ENCODE measurements at regions of chr4 and their contacts with region 1.

Region 1: DNA sequence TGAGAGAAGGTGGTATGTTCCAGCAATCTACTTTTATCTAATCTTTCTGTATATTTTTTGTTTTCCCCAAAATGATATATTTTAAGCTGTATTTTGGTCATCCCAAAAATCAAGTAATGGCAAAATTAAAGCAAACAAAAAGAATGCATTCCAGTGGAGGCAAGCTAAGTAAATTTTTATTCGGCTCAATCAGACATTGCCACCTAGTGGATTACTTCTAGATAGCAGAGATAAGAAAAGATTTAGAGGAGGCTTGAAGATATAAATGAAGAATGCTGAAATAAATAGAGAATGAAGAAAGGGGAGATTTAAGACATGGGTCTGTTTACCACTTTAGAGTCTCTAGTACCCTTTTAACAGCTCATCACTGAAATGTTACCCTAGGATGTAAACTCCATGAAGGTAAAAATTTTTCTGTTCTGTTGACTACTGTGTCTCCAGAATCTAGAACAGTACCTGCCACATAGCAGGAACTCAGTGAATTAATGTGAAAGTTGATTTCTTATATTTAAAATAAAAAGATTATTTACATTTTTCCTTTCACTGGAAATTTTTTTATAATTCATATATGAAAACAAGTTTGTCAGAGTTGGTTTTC is 110.9 kb upstream of the ANK2 start:
- DNase-seq: peak; percentile 15
- ATAC-seq: no peak
- H3K4me3 ChIP-seq: no peak overlapping the region
- H3K27ac ChIP-seq: no peak overlapping the region
- H3K4me1 ChIP-seq: no peaks in the 10 kb centered on the region
- H3K27me3 ChIP-seq: no peaks in the 10 kb centered on the region
- CTCF ChIP-seq: peak; percentile 70; the same call in 1 of the 2 replicates

Region 2: DNA sequence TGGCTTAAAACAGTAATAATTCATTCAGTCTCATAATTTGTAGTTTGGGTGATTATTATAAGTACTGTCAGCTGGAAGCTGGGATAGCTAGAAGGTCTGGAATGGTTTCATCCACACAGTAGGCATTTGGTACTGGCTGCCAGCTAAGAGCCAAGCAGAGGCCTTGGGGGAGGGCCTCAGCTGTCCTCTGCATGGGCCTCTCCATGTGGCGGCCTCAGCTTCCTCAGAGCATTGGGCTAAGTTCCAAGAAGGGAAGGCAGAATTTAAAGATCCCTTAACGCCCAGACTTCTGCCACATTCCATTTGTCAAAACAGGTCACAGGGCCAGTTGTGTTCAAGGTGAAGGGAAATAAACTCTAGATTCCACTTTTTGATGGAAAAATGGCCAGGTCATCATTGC is 515.9 kb before region 1 on chr4:
- CTCF ChIA-PET with region 1: no interaction called
- POLR2A ChIA-PET with region 1: no interaction called
- in situ Hi-C with region 1: no loop called
- intact Hi-C with region 1: no loop called
- DNase-seq: no peak
- ATAC-seq: no peak
- H3K4me3 ChIP-seq: no peak overlapping the region
- H3K27ac ChIP-seq: no peak overlapping the region
- H3K4me1 ChIP-seq: no peaks in the 10 kb centered on the region
- H3K27me3 ChIP-seq: no peaks in the 10 kb centered on the region
- CTCF ChIP-seq: no peak

Region 3: GRCh38 chr4:112636688-112637551 is 301.6 kb before region 1 on chr4 and contains the starts of genes LARP7 and ZGRF1:
- CTCF ChIA-PET with region 1: no interaction called
- POLR2A ChIA-PET with region 1: no interaction called
- in situ Hi-C with region 1: no loop called
- intact Hi-C with region 1: loop called (anchors 5 kb)
- DNase-seq: peak; percentile 92
- ATAC-seq: peak; percentile 98
- H3K4me3 ChIP-seq: peak within 1 kb of the TSS; percentile 92 to 98
- H3K27ac ChIP-seq: peak within 1 kb of the TSS; percentile 96
- H3K4me1 ChIP-seq: peaks cover 3% of the 10 kb centered on the region; the same call in 1 of the 2 replicates
- H3K27me3 ChIP-seq: no peaks in the 10 kb centered on the region
- CTCF ChIP-seq: peak; percentile 73
- total RNA-seq, gene LARP7: 21.7 TPM
- total RNA-seq, gene ZGRF1: 7.4 TPM

Region 4: GRCh38 chr4:112765317-112765975 is 173.1 kb before region 1 on chr4:
- CTCF ChIA-PET with region 1: no interaction called
- POLR2A ChIA-PET with region 1: no interaction called
- in situ Hi-C with region 1: no loop called
- intact Hi-C with region 1: loop called (anchors 5 kb)
- DNase-seq: no peak
- ATAC-seq: peak; percentile 66; the same call in 1 of the 2 replicates
- H3K4me3 ChIP-seq: no peak overlapping the region
- H3K27ac ChIP-seq: no peak overlapping the region
- H3K4me1 ChIP-seq: no peaks in the 10 kb centered on the region
- H3K27me3 ChIP-seq: no peaks in the 10 kb centered on the region
- CTCF ChIP-seq: peak; percentile 56

Region 5: GRCh38 chr4:112853662-112854256 is 84.8 kb before region 1 on chr4:
- CTCF ChIA-PET with region 1: no interaction called
- POLR2A ChIA-PET with region 1: no interaction called
- in situ Hi-C with region 1: no loop called
- intact Hi-C with region 1: loop called (anchors 5 kb)
- DNase-seq: no peak
- ATAC-seq: no peak
- H3K4me3 ChIP-seq: no peak overlapping the region
- H3K27ac ChIP-seq: no peak overlapping the region
- H3K4me1 ChIP-seq: no peaks in the 10 kb centered on the region
- H3K27me3 ChIP-seq: no peaks in the 10 kb centered on the region
- CTCF ChIP-seq: peak; percentile 45; the same call in 1 of the 2 replicates

Measured in Panc1 (cell line).